Heart right ventricle (tissue), 16 donors: ENCODE measurements at regions of chr16 and their contacts with region 1.

Region 1: GRCh38 chr16:85393674-85394483 is 219.2 kb upstream of the GSE1 start:
- DNase-seq: peak; percentile 64 to 79
- ATAC-seq: peak; percentile 15 to 66 (median 42)
- H3K4me3 ChIP-seq: no peak overlapping the region
- H3K27ac ChIP-seq: no peak overlapping the region
- H3K4me1 ChIP-seq: peaks cover 22 to 51% (median 33%) of the 10 kb centered on the region in 9 donors
- H3K27me3 ChIP-seq: no peaks in the 10 kb centered on the region
- CTCF ChIP-seq: peak; percentile 73 to 92 (median 89)

Region 2: DNA sequence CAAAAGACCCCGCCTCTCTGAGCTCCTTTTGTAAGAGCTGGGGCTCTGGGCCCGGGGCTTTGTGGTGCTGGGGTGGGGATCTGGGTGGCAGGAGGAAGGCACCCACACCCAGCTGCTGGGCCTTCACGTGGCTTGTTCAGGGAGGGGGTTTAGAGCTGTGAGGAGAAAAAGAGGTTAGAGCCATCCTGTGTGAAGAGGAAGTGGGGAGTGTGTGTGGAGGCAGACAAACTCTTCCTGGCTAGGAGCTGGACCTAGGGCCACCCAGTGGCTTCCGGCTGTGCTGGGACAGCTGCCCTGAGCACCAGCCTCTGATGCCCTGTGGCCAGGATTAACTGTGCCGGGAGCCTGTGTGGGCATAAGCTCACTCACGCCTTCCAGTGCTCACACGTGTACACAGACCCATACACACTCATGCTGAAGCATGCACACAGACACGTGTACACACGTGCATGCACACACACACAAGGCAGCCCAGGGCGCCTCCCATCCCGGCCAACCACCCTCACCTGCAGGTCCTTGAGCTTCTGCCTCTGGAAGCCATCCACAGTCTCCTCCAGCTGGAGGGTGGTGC is 289.0 kb before region 1 on chr16:
- intact Hi-C with region 1: loop called in 1 of 10 experiments (anchors 10 kb)
- DNase-seq: no peak
- ATAC-seq: peak in 7 of 8 donors; percentile 33 to 57 (median 42)
- H3K4me3 ChIP-seq: no peak overlapping the region
- H3K27ac ChIP-seq: no peak overlapping the region
- H3K4me1 ChIP-seq: peaks cover 0 to 25% (median 0%) of the 10 kb centered on the region in 9 donors
- H3K27me3 ChIP-seq: no peaks in the 10 kb centered on the region
- CTCF ChIP-seq: no peak

Region 3: DNA sequence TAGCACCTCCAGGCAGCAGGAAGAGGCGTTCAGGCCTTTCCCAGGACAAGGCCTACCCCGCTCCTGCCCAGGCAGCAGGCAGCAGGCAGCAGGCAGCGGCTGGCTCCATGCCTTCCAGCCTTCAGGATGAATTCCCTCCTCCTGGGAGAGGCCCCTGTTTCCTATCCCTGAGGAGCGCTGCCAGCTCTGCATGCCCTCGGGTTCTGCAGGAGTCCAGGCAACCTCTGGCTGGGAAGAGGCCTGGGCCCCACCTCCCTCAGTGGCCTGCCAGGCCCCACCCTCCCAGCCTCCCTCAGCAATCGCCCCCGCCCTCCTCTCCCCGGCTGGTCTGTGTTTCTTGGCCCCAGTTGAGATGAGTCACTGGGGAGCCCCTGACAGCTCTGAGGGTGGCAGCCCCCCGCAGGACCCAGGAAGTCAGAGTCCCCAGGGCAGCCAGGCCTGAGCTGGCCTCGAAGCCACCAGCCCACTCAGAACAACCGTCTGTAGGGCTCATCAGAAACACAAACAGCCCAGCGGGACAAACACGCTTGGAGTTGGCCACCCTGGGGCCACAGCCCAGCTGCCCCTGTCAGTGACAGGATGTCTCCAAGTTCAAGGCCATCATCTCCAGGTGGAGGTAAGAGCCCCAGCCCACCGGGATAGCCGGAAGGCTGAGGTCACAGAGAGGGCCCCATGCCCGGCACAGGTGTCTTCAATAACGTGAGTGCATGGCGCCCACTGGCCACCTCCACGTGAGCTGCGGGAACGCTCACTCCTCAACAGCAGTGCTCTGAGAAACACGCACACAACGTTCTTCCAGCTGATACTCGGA is 242.1 kb before region 1 on chr16:
- intact Hi-C with region 1: no loop called
- DNase-seq: peak; percentile 81 to 83
- ATAC-seq: peak; percentile 58 to 86 (median 78)
- H3K4me3 ChIP-seq: no peak overlapping the region
- H3K27ac ChIP-seq: peak overlapping the region; percentile 21 to 91 (median 78)
- H3K4me1 ChIP-seq: peaks cover 16 to 77% (median 57%) of the 10 kb centered on the region in 9 donors
- H3K27me3 ChIP-seq: no peaks in the 10 kb centered on the region
- CTCF ChIP-seq: no peak

Region 4: DNA sequence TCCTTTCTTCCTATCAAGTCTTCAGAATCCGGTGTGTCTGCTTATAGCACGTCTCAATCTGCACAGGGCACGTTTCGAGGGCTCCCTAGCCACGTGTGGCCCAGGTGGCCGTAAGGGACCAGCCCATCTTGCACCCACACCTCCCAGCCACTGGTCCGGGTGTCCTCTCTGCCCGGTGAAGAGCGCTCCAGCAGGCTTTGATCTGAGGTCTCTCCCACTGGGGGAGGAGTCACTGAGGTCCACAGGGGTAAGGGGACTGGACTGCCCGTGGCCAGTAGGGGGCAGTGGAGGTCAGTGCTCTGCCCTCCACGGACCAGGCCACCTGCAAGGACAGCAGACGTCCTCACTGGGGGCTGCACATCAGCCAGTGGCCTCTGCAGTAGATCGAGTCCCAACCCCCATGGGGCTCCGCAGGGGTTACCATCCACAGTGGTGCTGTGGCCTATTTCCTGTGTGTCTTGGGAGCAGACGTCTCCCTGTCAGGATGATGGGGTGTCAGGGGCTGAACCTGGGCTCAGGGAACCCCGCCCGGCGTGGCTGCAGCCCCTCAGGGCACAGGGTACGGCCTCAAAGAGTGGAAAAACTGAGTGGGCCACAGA is 77.5 kb before region 1 on chr16:
- intact Hi-C with region 1: loop called in 1 of 10 experiments (anchors 10 kb)
- DNase-seq: peak; percentile 51 to 63
- ATAC-seq: peak; percentile 57 to 80 (median 73)
- H3K4me3 ChIP-seq: no peak overlapping the region
- H3K27ac ChIP-seq: no peak overlapping the region
- H3K4me1 ChIP-seq: peaks cover 9 to 53% (median 23%) of the 10 kb centered on the region in 9 donors
- H3K27me3 ChIP-seq: peaks cover 0 to 5% (median 0%) of the 10 kb centered on the region in 7 donors
- CTCF ChIP-seq: peak; percentile 64 to 90 (median 86)

Region 5: GRCh38 chr16:85360323-85361277 is 33.3 kb before region 1 on chr16:
- intact Hi-C with region 1: no loop called
- DNase-seq: no peak
- ATAC-seq: no peak
- H3K4me3 ChIP-seq: no peak overlapping the region
- H3K27ac ChIP-seq: no peak overlapping the region
- H3K4me1 ChIP-seq: peaks cover 0 to 7% (median 0%) of the 10 kb centered on the region in 9 donors
- H3K27me3 ChIP-seq: no peaks in the 10 kb centered on the region
- CTCF ChIP-seq: no peak

Region 6: DNA sequence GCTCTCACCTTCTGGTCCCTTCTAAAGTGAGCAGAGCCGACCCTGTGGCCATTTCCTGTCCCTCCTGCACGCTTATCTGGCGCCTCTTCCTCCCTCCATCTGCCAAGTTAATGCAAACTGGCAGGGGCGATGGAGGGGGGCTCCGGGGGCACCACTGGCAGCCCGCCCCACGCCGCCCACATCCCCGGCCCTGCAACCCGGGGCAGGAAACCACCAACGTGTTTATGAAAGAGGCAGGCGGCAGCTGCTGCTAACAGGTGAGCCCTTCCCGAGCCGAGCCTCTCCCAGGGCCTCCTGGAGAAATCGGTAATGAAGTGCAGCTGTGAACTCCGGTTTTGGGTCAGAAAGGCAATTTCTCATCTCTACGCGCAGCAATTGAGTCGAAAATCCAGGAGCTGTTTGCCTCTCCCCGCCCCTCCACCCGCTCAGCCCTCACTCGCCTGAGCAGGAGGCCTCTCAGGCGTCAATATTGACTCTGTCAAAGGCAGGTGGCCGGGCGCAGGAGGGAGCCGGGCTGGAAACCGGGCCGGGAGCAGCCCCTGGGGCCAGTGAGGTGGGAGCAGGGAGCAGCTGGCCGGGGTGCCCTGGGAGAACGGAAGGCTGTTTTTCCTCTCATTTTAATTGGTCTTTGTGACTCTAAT is 54.8 kb after region 1 on chr16:
- intact Hi-C with region 1: no loop called
- DNase-seq: no peak
- ATAC-seq: no peak
- H3K4me3 ChIP-seq: no peak overlapping the region
- H3K27ac ChIP-seq: peak overlapping the region in 1 of 10 donors; percentile 26
- H3K4me1 ChIP-seq: peaks cover 0 to 12% (median 3%) of the 10 kb centered on the region in 9 donors
- H3K27me3 ChIP-seq: peaks cover 0 to 22% (median 0%) of the 10 kb centered on the region in 7 donors
- CTCF ChIP-seq: no peak